ENCODE measurements at regions of chr1 and their contacts with region 1.

Region 1: GRCh38 chr1:37682334-37682987 is 9.9 kb upstream of the CDCA8 start:
- DNase-seq: peak; percentile 83
- H3K4me3 Mint-ChIP-seq: no peak overlapping the region
- H3K27ac Mint-ChIP-seq: no peak overlapping the region
- H3K4me1 Mint-ChIP-seq: peaks cover 6% of the 10 kb centered on the region
- H3K27me3 Mint-ChIP-seq: no peaks in the 10 kb centered on the region

Region 2: GRCh38 chr1:37595440-37596319 is 86.8 kb before region 1 on chr1 and contains the start of gene GNL2:
- CTCF ChIA-PET with region 1: interaction called, 10 read pairs
- POLR2A ChIA-PET with region 1: no interaction called
- DNase-seq: peak; percentile 96
- H3K4me3 Mint-ChIP-seq: peak within 1 kb of the TSS; percentile 96
- H3K27ac Mint-ChIP-seq: peak within 1 kb of the TSS; percentile 97
- H3K4me1 Mint-ChIP-seq: peaks cover 25% of the 10 kb centered on the region
- H3K27me3 Mint-ChIP-seq: peaks cover 2% of the 10 kb centered on the region
- total RNA-seq, gene GNL2: 51.4 to 58.1 TPM

Region 3: GRCh38 chr1:37602750-37603694 is 79.4 kb before region 1 on chr1:
- CTCF ChIA-PET with region 1: interaction called, 9 read pairs
- POLR2A ChIA-PET with region 1: interaction called, 13 read pairs
- DNase-seq: peak; percentile 58
- H3K4me3 Mint-ChIP-seq: no peak overlapping the region
- H3K27ac Mint-ChIP-seq: no peak overlapping the region
- H3K4me1 Mint-ChIP-seq: no peaks in the 10 kb centered on the region
- H3K27me3 Mint-ChIP-seq: peaks cover 33% of the 10 kb centered on the region

Region 4: GRCh38 chr1:37708471-37708870 is 26.0 kb after region 1 on chr1:
- CTCF ChIA-PET with region 1: no interaction called
- POLR2A ChIA-PET with region 1: no interaction called
- DNase-seq: no peak
- H3K4me3 Mint-ChIP-seq: no peak overlapping the region
- H3K27ac Mint-ChIP-seq: no peak overlapping the region
- H3K4me1 Mint-ChIP-seq: no peaks in the 10 kb centered on the region
- H3K27me3 Mint-ChIP-seq: no peaks in the 10 kb centered on the region